Activated CD4-positive, alpha-beta memory T cell treated with anti-CD3 and anti-CD28 coated beads, Interleukin-2, amount 10 ng/mL, durations not matched to agents 7 days and 5 days (primary cell): ENCODE measurements at regions of chr5 and their contacts with region 1.

Region 1: GRCh38 chr5:69093771-69094482 is at the start of gene SLC30A5:
- DNase-seq: peak; percentile 99
- H3K4me3 Mint-ChIP-seq: peak within 1 kb of the TSS; percentile 95
- H3K27ac Mint-ChIP-seq: peak within 1 kb of the TSS; percentile 90
- H3K4me1 Mint-ChIP-seq: peaks cover 37% of the 10 kb centered on the region
- H3K27me3 Mint-ChIP-seq: no peaks in the 10 kb centered on the region
- total RNA-seq, gene SLC30A5: 34.2 to 43.1 TPM

Region 2: DNA sequence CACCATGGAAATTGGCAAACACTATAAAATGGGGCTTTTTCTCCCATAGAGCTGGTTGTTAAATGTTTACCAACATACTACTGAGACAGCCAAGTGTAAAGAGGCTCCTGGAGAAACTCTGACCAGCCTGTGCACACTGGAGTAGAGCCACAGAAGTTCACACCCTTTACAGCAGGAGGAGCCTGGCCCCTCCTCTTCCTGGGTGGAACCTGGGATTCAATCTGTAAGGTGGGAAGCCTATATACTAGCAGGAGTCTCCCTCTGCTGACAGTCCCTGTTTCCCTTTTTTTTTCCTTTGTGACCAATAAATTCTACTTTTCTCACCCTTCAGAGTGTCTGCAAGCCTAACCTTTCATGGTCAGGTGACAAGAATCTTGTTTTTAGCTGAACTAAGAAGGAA is 10.5 kb before region 1 on chr5:
- CTCF ChIA-PET with region 1: interaction called, 30 read pairs
- POLR2A ChIA-PET with region 1: interaction called, 3 read pairs
- DNase-seq: no peak
- H3K4me3 Mint-ChIP-seq: no peak overlapping the region
- H3K27ac Mint-ChIP-seq: no peak overlapping the region
- H3K4me1 Mint-ChIP-seq: peaks cover 25% of the 10 kb centered on the region
- H3K27me3 Mint-ChIP-seq: no peaks in the 10 kb centered on the region

Region 3: DNA sequence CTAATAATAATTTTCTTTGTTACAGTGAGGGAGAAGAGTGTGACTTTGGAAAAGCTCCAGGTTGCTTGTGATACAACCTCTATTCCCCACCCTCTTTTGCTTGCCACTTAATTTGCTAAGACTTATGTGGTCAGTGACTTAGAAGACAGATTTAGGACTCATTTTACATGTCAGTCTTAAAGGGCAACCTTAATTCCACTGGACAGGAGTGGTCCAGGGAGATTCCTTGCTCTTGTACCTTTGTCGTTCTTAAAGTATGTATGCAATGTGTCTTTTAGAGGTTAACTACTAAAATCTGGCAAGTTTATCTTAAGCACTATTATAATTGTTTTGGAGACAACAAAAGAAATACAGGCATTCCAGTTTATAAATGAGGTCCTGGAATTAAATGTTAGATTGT is 19.9 kb after region 1 on chr5:
- CTCF ChIA-PET with region 1: interaction called, 10 read pairs
- POLR2A ChIA-PET with region 1: no interaction called
- DNase-seq: no peak
- H3K4me3 Mint-ChIP-seq: no peak overlapping the region
- H3K27ac Mint-ChIP-seq: no peak overlapping the region
- H3K4me1 Mint-ChIP-seq: no peaks in the 10 kb centered on the region
- H3K27me3 Mint-ChIP-seq: no peaks in the 10 kb centered on the region

Region 4: DNA sequence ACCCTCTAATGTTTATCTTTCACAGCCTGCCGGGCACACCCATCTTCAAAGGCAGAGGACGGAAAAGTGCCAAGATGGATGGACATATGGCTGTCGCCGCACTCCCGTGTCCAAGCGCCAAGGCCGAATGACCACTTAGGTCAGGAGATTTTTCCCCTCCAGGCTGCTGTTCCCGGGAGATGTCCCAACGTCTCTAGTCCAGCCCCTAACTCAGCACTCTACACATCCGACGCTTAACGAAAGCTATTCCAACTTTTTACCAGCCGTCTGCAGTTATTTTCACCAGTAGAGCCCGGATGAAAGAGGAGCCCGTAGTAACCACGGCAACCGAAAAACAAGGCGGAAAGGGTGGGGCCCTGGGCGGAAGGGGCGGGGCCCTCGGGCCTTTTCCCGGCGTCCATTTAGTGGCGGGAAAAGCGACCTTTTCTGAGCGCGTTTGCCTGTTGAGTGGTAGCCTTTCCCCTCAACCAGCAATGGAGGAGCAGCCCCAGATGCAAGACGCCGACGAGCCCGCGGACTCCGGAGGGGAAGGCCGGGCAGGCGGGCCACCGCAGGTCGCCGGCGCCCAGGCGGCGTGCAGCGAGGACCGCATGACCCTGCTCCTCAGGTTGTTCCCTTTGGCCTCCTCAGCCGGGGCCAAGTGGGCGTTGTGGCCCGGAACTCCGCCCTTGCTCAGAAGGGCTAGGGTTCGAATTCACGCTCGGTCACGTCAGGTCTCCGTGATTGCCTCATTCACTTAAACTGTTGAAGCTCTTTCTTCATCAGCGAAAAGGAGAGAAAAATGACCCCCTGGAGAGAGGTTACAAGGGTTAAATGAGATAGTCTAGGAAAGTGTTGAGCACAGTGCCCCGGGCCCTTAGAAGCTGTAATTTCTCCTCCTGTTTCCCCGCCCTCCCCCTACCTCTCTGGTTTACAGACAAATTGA is 95.5 kb after region 1 on chr5 and contains the start of gene CENPH:
- CTCF ChIA-PET with region 1: interaction called, 13 read pairs
- POLR2A ChIA-PET with region 1: interaction called, 17 read pairs
- DNase-seq: peak; percentile 95
- H3K4me3 Mint-ChIP-seq: peak within 1 kb of the TSS; percentile 92
- H3K27ac Mint-ChIP-seq: peak within 1 kb of the TSS; percentile 93
- H3K4me1 Mint-ChIP-seq: peaks cover 17% of the 10 kb centered on the region
- H3K27me3 Mint-ChIP-seq: no peaks in the 10 kb centered on the region
- total RNA-seq, gene CENPH: 41.8 to 44.1 TPM

Region 5: DNA sequence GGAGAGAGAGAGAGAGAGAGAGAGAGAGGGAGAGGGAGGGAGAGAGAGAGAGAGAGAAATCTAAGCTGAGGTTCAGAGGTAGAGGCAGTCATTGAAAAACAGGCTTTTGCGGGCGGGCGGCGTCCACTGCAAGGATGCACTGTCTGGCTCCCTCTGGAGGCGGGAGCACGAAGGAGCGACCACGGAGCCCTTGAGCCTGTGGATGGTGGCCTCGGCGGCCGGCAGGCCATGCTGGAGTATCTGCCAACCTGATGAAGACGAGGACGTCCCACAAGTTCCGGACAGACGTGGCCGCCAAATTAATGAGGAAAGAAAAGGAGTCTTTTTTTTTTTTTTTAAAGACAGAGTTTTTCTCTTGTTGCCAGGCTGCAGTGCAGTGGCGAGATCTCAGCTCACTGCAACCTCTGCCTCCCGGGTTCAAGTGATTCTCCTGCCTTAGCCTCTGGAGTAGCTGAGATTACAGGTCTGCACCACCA is 240.9 kb after region 1 on chr5:
- CTCF ChIA-PET with region 1: interaction called, 32 read pairs
- POLR2A ChIA-PET with region 1: interaction called, 11 read pairs
- DNase-seq: peak; percentile 82
- H3K4me3 Mint-ChIP-seq: peak overlapping the region; percentile 11
- H3K27ac Mint-ChIP-seq: no peak overlapping the region
- H3K4me1 Mint-ChIP-seq: peaks cover 20% of the 10 kb centered on the region
- H3K27me3 Mint-ChIP-seq: no peaks in the 10 kb centered on the region